Mammary epithelial cell (primary cell): ENCODE measurements at regions of chr11 and their contacts with region 1.

Region 1: DNA sequence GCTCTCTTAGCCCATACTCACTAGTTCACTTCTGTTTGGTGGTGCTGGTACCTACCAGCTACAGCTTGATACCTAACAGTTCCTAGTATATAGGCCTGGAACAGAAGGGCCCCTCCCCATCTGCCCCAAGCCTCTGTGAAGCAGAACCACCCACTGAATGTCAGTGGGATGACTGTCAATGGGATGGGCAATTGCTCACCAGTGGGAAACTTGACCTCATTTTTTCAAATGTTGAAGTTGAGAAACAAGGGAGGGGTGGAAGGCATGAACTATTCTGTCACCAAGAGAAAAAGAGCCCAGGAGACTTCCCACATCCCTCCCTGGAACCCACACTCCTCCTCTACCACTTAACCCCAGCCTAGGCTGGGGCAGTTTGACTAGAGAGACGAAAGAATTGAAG is at the start of gene NLRP10:
- DNase-seq: peak; percentile 91
- H3K4me3 ChIP-seq: peak within 1 kb of the TSS in 1 of 3 experiments; percentile 19
- H3K27ac ChIP-seq: peak within 1 kb of the TSS; percentile 93
- H3K4me1 ChIP-seq: peaks cover 49% of the 10 kb centered on the region
- H3K27me3 ChIP-seq: no peaks in the 10 kb centered on the region
- CTCF ChIP-seq: no peak
- total RNA-seq, gene NLRP10: 9.2 to 18.0 TPM

Region 2: GRCh38 chr11:7986768-7987559 is 21.6 kb after region 1 on chr11 and contains the start of gene EIF3F:
- CTCF ChIA-PET with region 1: interaction called, 9 read pairs
- dilution Hi-C with region 1: no loop called
- in situ Hi-C with region 1: no loop called
- intact Hi-C with region 1: loop called (anchors 1 kb)
- DNase-seq: peak; percentile 98
- H3K4me3 ChIP-seq: peak within 1 kb of the TSS; percentile 68 to 98 (median 79)
- H3K27ac ChIP-seq: peak within 1 kb of the TSS; percentile 84
- H3K4me1 ChIP-seq: peaks cover 31% of the 10 kb centered on the region
- H3K27me3 ChIP-seq: no peaks in the 10 kb centered on the region
- CTCF ChIP-seq: peak; percentile 84 to 86
- total RNA-seq, gene EIF3F: 234 to 399 TPM